HepG2 (cell line): ENCODE measurements at regions of chr2 and their contacts with region 1.

Region 1: DNA sequence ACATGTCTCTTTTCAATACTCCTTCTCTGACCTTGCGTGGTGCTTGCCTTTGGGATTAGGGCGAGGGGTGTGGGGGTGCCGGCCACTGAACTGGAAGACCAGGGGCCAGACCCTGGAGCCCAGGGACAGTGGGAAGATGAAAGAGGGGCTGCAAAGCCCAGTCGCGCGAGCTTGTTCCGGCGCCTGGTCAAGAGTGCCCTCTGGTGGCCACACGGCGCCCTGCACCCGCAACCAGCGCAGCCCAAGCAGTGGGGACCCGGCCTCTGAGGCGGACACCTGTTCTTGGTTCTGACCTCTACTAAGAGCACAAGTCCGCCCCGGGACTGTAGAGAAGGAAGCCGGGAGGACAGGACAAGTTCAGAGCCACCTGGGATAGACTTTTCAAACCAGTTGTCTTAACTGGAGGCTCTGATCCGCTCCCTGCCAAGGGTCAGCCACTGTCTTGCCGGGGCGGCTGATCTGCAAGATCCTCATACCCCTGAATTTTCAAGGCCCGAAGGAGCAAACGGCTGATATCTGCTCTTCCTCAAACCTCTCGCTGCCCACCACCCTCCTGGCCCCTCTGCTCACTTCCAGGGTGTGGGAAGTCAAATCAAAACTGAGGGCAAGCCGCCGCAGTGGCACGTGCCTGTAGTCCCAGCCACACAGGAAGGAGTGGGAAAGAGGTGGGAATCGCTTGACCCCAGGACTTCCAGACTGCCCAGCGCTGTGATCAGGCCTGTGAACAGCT is 14.9 kb upstream of the MSH6 start:
- DNase-seq: peak; percentile 27
- ATAC-seq: peak; percentile 94
- H3K4me3 ChIP-seq: peak overlapping the region in 1 of 3 experiments; percentile 38; a peak in 1 of 6 replicates
- H3K27ac ChIP-seq: no peak overlapping the region
- H3K4me1 ChIP-seq: peaks cover 6% of the 10 kb centered on the region; the same call in 1 of the 2 replicates
- H3K27me3 ChIP-seq: peaks cover 0 to 8% of the 10 kb centered on the region in 2 experiments; a peak in 2 of 5 replicates
- CTCF ChIP-seq: peak; percentile 99
- EP300 ChIP-seq: no peak
- POLR2A ChIP-seq: no peak
- RAD21 ChIP-seq: peak; percentile 98

Region 2: DNA sequence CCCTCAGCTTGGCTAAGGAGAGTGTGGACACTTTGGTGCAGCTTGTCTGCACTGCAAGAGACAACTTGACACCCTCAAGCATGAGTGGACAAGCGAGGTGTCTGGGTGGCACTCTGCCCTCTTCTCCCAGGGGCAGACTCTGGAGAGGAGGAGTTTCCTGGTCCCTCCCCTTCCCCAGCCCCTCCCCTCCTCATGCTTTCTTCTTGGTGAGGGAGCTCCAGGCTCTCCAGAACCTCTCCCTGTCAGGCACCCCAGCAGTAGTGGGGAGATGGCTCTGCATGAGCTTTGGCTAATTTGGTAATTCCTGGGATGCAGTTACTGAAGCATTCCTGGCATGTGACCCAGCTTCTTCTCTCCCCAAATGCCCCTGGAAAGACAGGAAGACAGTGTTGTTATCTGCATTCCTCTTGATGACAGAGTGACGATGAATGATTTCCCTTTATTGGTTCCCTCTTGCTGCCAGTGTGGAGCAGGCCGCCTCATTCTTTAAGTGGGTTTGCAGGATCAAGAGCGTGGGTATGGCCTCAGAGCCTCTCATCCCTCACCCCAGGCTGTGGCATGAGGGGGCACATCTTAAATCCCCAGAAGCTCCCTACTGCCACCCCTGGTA is 702.2 kb before region 1 on chr2:
- CTCF ChIA-PET with region 1: no interaction called
- POLR2A ChIA-PET with region 1: no interaction called
- in situ Hi-C with region 1: no loop called
- intact Hi-C with region 1: no loop called
- DNase-seq: no peak
- ATAC-seq: no peak
- H3K4me3 ChIP-seq: no peak overlapping the region
- H3K27ac ChIP-seq: no peak overlapping the region
- H3K4me1 ChIP-seq: peaks cover 64% of the 10 kb centered on the region
- H3K27me3 ChIP-seq: no peaks in the 10 kb centered on the region
- CTCF ChIP-seq: no peak
- EP300 ChIP-seq: no peak
- POLR2A ChIP-seq: no peak
- RAD21 ChIP-seq: no peak

Region 3: GRCh38 chr2:47339745-47340541 is 428.1 kb before region 1 on chr2:
- CTCF ChIA-PET with region 1: no interaction called
- POLR2A ChIA-PET with region 1: interaction called, 4 read pairs
- in situ Hi-C with region 1: loop called (anchors 10 kb)
- intact Hi-C with region 1: loop called (anchors 1 kb)
- DNase-seq: peak; percentile 58
- ATAC-seq: no peak
- H3K4me3 ChIP-seq: no peak overlapping the region
- H3K27ac ChIP-seq: peak overlapping the region; percentile 28
- H3K4me1 ChIP-seq: peaks cover 60% of the 10 kb centered on the region
- H3K27me3 ChIP-seq: no peaks in the 10 kb centered on the region
- CTCF ChIP-seq: no peak
- EP300 ChIP-seq: no peak
- POLR2A ChIP-seq: no peak
- RAD21 ChIP-seq: no peak

Region 4: GRCh38 chr2:47437287-47437686 is 330.8 kb before region 1 on chr2:
- CTCF ChIA-PET with region 1: interaction called, 12 read pairs
- POLR2A ChIA-PET with region 1: no interaction called
- in situ Hi-C with region 1: loop called (anchors 5 kb)
- intact Hi-C with region 1: loop called (anchors 1 kb)
- DNase-seq: no peak
- ATAC-seq: no peak
- H3K4me3 ChIP-seq: no peak overlapping the region
- H3K27ac ChIP-seq: no peak overlapping the region
- H3K4me1 ChIP-seq: no peaks in the 10 kb centered on the region
- H3K27me3 ChIP-seq: no peaks in the 10 kb centered on the region
- CTCF ChIP-seq: peak; percentile 16; the same call in 1 of the 2 replicates
- EP300 ChIP-seq: no peak
- POLR2A ChIP-seq: no peak
- RAD21 ChIP-seq: no peak

Region 5: GRCh38 chr2:47620770-47621437 is 147.1 kb before region 1 on chr2:
- CTCF ChIA-PET with region 1: no interaction called
- POLR2A ChIA-PET with region 1: no interaction called
- in situ Hi-C with region 1: no loop called
- intact Hi-C with region 1: no loop called
- DNase-seq: no peak
- ATAC-seq: no peak
- H3K4me3 ChIP-seq: no peak overlapping the region
- H3K27ac ChIP-seq: no peak overlapping the region
- H3K4me1 ChIP-seq: peaks cover 11% of the 10 kb centered on the region
- H3K27me3 ChIP-seq: no peaks in the 10 kb centered on the region
- CTCF ChIP-seq: no peak
- EP300 ChIP-seq: no peak
- POLR2A ChIP-seq: no peak
- RAD21 ChIP-seq: no peak

Region 6: DNA sequence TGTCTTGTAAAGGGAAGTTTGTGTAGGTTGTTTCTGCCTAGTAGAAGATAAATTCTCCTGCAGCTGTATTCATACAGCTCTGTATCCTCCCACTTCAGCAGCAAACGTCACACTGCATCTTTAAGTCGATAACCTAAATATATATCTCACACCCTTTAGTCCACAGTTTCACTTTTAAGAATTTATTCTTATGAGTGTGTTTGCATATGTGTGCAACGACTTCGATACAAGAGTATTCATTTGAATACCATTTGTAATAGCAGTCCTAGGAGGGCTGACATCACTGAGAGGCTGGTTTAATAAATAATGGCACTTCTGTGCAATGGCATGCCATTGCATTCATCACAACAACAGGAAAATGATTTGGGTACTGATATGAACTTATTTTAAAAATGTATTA is 48.9 kb before region 1 on chr2:
- CTCF ChIA-PET with region 1: no interaction called
- POLR2A ChIA-PET with region 1: no interaction called
- in situ Hi-C with region 1: no loop called
- intact Hi-C with region 1: loop called (anchors 1 kb)
- DNase-seq: no peak
- ATAC-seq: no peak
- H3K4me3 ChIP-seq: no peak overlapping the region
- H3K27ac ChIP-seq: no peak overlapping the region
- H3K4me1 ChIP-seq: no peaks in the 10 kb centered on the region
- H3K27me3 ChIP-seq: no peaks in the 10 kb centered on the region
- CTCF ChIP-seq: no peak
- EP300 ChIP-seq: no peak
- POLR2A ChIP-seq: no peak
- RAD21 ChIP-seq: no peak

Region 7: DNA sequence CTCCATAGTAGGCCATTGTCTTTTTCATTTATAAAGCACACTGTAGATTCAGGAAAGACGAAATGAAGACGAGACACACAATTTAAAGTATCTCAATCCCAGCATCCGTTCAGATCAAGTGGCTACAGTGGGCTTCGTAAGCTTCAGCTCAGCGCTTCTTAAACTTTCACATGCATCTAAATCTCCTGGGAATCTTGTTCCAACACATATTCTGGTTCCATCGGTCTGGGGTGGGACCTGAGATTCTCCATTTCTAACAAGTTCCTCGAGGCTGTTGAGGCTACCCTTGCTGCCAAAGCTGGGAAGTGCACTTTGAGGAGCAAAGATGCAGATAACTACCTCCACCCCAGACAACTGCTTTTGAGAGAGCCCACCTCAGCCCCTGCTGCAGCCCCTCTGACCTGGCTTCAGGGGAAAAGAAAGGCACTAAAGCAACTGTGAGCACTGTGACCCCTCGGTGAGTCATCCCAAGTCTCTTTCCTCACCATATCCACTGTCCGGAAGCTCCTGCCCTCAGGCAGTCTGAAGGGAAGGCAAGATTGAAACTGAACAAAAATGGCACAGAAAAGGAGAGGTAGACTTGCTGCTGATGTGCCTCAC is 339.4 kb after region 1 on chr2:
- CTCF ChIA-PET with region 1: no interaction called
- POLR2A ChIA-PET with region 1: no interaction called
- in situ Hi-C with region 1: no loop called
- intact Hi-C with region 1: loop called (anchors 1 kb)
- DNase-seq: peak; percentile 39
- ATAC-seq: no peak
- H3K4me3 ChIP-seq: peak overlapping the region in 1 of 3 experiments; percentile 74; a peak in 2 of 6 replicates
- H3K27ac ChIP-seq: no peak overlapping the region
- H3K4me1 ChIP-seq: peaks cover 51% of the 10 kb centered on the region
- H3K27me3 ChIP-seq: peaks cover 0 to 3% of the 10 kb centered on the region in 2 experiments; a peak in 1 of 5 replicates
- CTCF ChIP-seq: no peak
- EP300 ChIP-seq: peak in 1 of 2 experiments; percentile 10; a peak in 1 of 4 replicates
- POLR2A ChIP-seq: no peak
- RAD21 ChIP-seq: no peak